ENCODE measurements at regions of chr20 and their contacts with region 1.

Region 1: GRCh38 chr20:48904365-48905296 is 16.9 kb upstream of the ARFGEF2 start:
- DNase-seq: peak in 8 of 9 donors; percentile 8 to 62 (median 52)
- ATAC-seq: peak; percentile 86
- H3K4me3 ChIP-seq: no peak overlapping the region
- H3K4me3 Mint-ChIP-seq: no peak overlapping the region
- H3K27ac ChIP-seq: no peak overlapping the region
- H3K27ac Mint-ChIP-seq: peak overlapping the region in 1 of 9 donors; percentile 15
- H3K4me1 ChIP-seq: peaks cover 0 to 5% of the 10 kb centered on the region in 2 donors
- H3K4me1 Mint-ChIP-seq: peaks cover 0 to 15% (median 7%) of the 10 kb centered on the region in 7 donors
- H3K27me3 ChIP-seq: no peaks in the 10 kb centered on the region
- H3K27me3 Mint-ChIP-seq: peaks cover 0 to 14% (median 0%) of the 10 kb centered on the region in 5 donors

Region 2: DNA sequence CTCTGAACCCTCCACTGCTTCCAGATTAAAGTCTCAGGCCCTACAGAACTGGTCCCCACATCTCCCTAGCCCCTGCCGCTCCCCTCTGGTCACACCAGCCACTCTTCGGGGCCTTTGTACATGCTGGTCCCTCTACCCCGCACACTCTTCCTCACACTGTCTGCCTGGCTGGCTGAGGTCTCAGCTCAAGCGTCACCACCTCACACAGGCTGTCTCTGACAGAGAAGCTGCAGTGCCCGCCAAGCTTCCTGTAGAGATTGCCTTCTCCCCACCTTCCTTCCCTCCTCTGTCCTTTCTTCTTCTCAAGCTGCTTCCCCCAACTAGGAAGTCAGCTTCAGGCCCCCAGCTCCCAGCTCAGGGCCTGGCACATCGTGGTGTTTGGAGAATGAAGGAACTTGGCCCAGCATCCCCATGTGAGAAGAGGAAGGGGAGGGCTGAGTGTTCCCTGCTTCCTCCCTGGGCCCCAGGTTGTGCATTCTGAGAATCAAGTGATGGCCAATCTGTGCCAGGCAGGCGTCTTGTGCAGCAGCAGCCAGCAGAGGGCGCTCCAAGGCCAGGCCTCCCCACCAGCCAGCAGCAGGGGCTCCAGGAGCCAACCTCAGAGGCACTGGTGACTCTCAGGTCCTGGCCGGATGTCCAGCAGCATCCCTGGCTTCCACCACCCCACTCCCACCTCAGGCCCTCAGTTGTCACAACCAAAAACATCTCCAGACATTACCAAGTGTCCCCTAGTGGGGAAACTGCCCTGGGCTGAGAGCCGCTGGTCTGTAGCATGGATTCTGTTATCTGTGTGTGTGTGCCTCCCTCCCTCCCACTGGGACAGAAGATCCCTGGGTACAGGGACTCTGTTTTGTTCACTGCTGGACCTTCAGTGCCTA is 269.0 kb before region 1 on chr20:
- CTCF ChIA-PET with region 1: interaction called, 3 read pairs
- POLR2A ChIA-PET with region 1: no interaction called
- intact Hi-C with region 1: loop called (anchors 1 kb)
- DNase-seq: peak in 7 of 9 donors; percentile 18 to 71 (median 33)
- ATAC-seq: peak; percentile 76
- H3K4me3 ChIP-seq: no peak overlapping the region
- H3K4me3 Mint-ChIP-seq: no peak overlapping the region
- H3K27ac ChIP-seq: no peak overlapping the region
- H3K27ac Mint-ChIP-seq: peak overlapping the region in 3 of 9 donors; percentile 14 to 68 (median 49)
- H3K4me1 ChIP-seq: no peaks in the 10 kb centered on the region
- H3K4me1 Mint-ChIP-seq: peaks cover 0 to 11% (median 4%) of the 10 kb centered on the region in 7 donors
- H3K27me3 ChIP-seq: no peaks in the 10 kb centered on the region
- H3K27me3 Mint-ChIP-seq: no peaks in the 10 kb centered on the region

Region 3: GRCh38 chr20:48657475-48658470 is 246.9 kb before region 1 on chr20:
- CTCF ChIA-PET with region 1: interaction called, 78 read pairs
- POLR2A ChIA-PET with region 1: interaction called, 3 read pairs
- intact Hi-C with region 1: loop called (anchors 1 kb)
- DNase-seq: peak; percentile 33 to 73 (median 61)
- ATAC-seq: peak; percentile 94
- H3K4me3 ChIP-seq: no peak overlapping the region
- H3K4me3 Mint-ChIP-seq: no peak overlapping the region
- H3K27ac ChIP-seq: no peak overlapping the region
- H3K27ac Mint-ChIP-seq: peak overlapping the region in 2 of 9 donors; percentile 19 to 52
- H3K4me1 ChIP-seq: peaks cover 0 to 3% of the 10 kb centered on the region in 2 donors
- H3K4me1 Mint-ChIP-seq: peaks cover 0 to 10% (median 3%) of the 10 kb centered on the region in 7 donors
- H3K27me3 ChIP-seq: no peaks in the 10 kb centered on the region
- H3K27me3 Mint-ChIP-seq: no peaks in the 10 kb centered on the region

Region 4: DNA sequence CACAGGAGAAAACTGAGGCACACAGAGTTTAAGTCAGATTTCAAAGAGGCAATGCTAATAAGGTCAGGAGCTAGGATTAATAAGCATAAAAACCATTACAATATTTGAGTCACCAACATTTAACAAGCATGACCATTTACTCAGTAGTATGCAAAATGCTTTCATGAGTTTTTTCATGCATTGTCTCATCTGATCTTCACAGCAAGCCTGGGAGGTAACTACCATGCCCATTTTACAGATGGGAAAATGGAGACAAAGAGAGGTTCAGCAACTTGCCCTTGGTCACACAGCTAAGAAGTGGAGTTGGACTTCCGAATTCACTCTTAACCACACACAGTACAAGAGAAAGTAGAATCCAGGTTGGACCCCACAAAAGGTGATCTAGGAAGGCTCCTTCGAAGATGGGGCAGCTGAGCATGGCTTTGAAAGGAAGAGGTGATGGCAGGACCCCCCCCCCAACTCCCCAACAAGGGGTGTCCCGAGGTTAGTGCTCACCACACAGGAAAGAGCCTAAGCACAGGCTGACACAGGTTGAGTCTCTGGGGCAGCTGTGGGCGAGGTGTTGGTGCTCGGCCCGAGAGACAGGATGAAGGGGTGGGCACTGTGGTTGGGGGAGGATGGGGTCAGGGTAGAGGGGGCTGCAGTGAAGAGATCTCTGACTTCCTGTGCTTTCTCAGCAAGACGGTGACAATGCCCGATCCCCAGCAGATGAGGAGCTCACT is 185.6 kb before region 1 on chr20:
- CTCF ChIA-PET with region 1: interaction called, 4 read pairs
- POLR2A ChIA-PET with region 1: no interaction called
- intact Hi-C with region 1: loop called in 1 of 2 experiments (anchors 5 kb)
- DNase-seq: peak in 2 of 9 donors; percentile 3 to 31
- ATAC-seq: peak; percentile 42
- H3K4me3 ChIP-seq: peak overlapping the region; percentile 3
- H3K4me3 Mint-ChIP-seq: peak overlapping the region in 5 of 10 donors; percentile 10 to 86 (median 32)
- H3K27ac ChIP-seq: no peak overlapping the region
- H3K27ac Mint-ChIP-seq: peak overlapping the region in 5 of 9 donors; percentile 37 to 84 (median 78)
- H3K4me1 ChIP-seq: peaks cover 47 to 86% of the 10 kb centered on the region in 2 donors
- H3K4me1 Mint-ChIP-seq: peaks cover 45 to 89% (median 65%) of the 10 kb centered on the region in 7 donors
- H3K27me3 ChIP-seq: no peaks in the 10 kb centered on the region
- H3K27me3 Mint-ChIP-seq: no peaks in the 10 kb centered on the region

Region 5: DNA sequence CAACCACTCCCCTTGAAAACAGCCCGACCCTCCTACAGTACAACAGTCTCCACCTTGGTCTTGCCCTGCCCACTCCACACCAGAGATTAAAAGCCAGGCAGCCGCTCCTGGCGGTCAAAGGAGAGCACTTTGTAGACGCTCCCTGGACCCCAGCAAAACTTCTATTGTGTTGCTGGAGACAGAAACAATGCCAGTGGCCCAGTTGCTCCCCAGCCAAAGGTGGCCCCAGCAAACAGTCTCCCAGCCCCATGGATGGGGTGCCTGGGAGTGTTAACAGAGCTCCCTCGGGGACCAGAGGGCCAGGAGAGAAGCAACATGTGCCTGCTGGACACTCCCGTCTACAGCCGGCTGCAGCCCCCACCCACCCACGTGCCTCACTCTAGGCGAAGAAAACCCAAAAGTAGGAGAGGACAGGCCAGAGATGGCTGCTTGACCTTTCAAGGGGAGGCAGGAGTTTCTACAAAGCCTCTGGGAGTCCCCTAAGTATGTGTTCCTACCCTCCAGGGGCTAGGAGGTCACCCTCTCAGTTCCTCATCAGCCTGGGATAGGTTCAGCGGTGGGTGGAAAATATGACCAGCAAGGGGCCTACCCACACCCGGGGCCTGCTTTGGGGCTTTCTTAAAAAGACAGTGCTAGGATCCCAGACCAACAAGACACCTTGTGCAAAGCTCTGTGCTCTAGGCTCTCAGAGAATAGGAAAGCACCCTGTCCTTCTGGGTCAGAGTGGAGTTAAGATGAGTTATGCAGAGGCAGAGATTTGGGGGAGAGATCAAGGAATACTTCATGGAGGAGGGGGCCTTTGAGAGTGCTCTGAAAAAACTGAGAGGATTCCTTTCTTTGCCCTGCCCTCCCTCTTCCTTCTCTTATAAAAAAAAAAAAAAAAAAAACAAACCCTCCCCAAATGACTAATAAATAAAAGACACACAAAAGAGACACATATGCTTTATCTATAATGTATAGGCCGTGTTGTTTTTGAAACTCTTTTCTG is 57.8 kb before region 1 on chr20:
- CTCF ChIA-PET with region 1: no interaction called
- POLR2A ChIA-PET with region 1: no interaction called
- intact Hi-C with region 1: no loop called
- DNase-seq: peak in 1 of 9 donors; percentile 68
- ATAC-seq: peak; percentile 65
- H3K4me3 ChIP-seq: no peak overlapping the region
- H3K4me3 Mint-ChIP-seq: no peak overlapping the region
- H3K27ac ChIP-seq: no peak overlapping the region
- H3K27ac Mint-ChIP-seq: no peak overlapping the region
- H3K4me1 ChIP-seq: no peaks in the 10 kb centered on the region
- H3K4me1 Mint-ChIP-seq: peaks cover 0 to 6% (median 0%) of the 10 kb centered on the region in 7 donors
- H3K27me3 ChIP-seq: no peaks in the 10 kb centered on the region
- H3K27me3 Mint-ChIP-seq: peaks cover 0 to 11% (median 0%) of the 10 kb centered on the region in 5 donors